Aorta (tissue), 5 donors: ENCODE measurements at regions of chr20 and their contacts with region 1.

Region 1: DNA sequence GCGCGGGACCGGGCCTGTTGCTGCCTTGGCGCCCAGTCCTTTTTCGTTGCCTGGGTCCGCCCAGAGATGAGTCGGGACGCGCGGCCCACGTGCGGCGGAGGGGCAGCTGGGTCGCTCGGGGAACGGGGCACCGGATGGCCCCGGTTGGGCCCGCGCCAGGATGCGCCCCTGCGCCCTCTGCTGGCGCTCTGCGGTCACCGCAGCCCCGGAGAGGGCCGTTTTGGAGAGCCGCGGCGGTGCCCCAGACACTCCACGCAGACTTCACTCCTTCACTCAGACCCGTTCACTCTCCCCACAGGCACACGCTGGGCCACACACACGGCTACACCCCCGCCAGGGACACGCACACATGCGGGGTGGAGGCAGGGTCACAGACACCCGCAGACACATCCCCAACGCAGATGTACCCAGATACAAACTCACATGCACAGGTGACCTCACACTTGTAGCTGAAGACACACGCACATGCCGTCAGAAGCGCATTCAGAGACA is 38.8 kb downstream of the SRC start:
- DNase-seq: peak; percentile 79 to 87
- ATAC-seq: peak; percentile 88
- H3K4me3 ChIP-seq: no peak overlapping the region
- H3K27ac ChIP-seq: no peak overlapping the region
- H3K4me1 ChIP-seq: no peaks in the 10 kb centered on the region
- H3K27me3 ChIP-seq: no peaks in the 10 kb centered on the region

Region 2: DNA sequence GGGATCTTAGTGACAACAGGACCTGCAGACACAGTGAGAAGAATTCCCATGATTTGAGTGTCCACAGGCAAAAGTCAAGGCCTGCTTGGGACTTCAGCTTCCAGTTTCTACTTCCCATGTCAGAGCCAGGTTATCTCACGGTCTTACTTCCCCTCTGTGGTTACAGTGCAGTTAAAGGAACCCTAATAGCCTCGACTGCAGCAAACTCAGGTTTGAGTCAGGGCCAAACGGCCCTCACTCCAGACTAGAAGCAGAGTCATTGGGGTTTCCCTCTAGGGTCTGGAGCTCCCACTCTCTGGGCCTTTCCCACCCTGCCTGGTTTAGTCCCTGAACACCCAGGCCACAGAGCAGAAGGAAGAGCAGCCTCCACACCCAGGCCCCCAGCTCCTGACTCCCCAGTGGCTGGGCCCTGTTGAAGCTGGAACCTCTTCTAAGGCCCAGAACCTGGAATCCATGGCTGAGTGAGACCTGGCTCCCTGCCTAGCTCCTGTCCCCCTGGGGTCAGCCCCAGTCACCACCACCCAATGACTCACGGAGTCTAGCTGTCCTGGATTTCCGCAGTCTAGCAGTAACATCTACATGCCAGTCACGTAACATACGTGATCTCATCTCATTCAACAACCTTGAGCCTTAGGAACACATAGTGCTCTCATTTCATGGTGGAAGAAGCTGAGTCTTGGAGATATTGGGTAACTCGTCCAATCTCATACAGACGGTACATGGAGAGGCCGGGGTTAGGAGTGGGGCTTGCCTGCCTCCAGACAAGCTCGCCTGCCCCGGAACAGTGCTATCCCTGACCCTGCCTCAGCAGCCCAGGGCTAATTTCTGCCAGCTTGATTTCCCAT is 113.9 kb before region 1 on chr20:
- intact Hi-C with region 1: loop called (anchors 2 to 5 kb)
- DNase-seq: peak; percentile 54 to 62
- ATAC-seq: peak; percentile 56
- H3K4me3 ChIP-seq: no peak overlapping the region
- H3K27ac ChIP-seq: no peak overlapping the region
- H3K4me1 ChIP-seq: no peaks in the 10 kb centered on the region
- H3K27me3 ChIP-seq: no peaks in the 10 kb centered on the region

Region 3: GRCh38 chr20:37276494-37277252 is 108.1 kb before region 1 on chr20:
- intact Hi-C with region 1: loop called (anchors 2 to 5 kb)
- DNase-seq: peak; percentile 74 to 76
- ATAC-seq: peak; percentile 84
- H3K4me3 ChIP-seq: no peak overlapping the region
- H3K27ac ChIP-seq: no peak overlapping the region
- H3K4me1 ChIP-seq: no peaks in the 10 kb centered on the region
- H3K27me3 ChIP-seq: no peaks in the 10 kb centered on the region

Region 4: GRCh38 chr20:37288091-37288490 is 96.6 kb before region 1 on chr20:
- intact Hi-C with region 1: loop called (anchors 5 kb)
- DNase-seq: no peak
- ATAC-seq: no peak
- H3K4me3 ChIP-seq: no peak overlapping the region
- H3K27ac ChIP-seq: no peak overlapping the region
- H3K4me1 ChIP-seq: no peaks in the 10 kb centered on the region
- H3K27me3 ChIP-seq: no peaks in the 10 kb centered on the region

Region 5: GRCh38 chr20:37345339-37346230 is 39.1 kb before region 1 on chr20 and contains the start of gene SRC:
- intact Hi-C with region 1: loop called in 1 of 2 experiments (anchors 2 kb)
- DNase-seq: peak; percentile 91 to 95
- ATAC-seq: peak; percentile 78
- H3K4me3 ChIP-seq: peak within 1 kb of the TSS; percentile 87 to 96
- H3K27ac ChIP-seq: peak within 1 kb of the TSS; percentile 71 to 74
- H3K4me1 ChIP-seq: no peaks in the 10 kb centered on the region
- H3K27me3 ChIP-seq: no peaks in the 10 kb centered on the region
- total RNA-seq, gene SRC: 51.3 to 72.4 TPM

Region 6: DNA sequence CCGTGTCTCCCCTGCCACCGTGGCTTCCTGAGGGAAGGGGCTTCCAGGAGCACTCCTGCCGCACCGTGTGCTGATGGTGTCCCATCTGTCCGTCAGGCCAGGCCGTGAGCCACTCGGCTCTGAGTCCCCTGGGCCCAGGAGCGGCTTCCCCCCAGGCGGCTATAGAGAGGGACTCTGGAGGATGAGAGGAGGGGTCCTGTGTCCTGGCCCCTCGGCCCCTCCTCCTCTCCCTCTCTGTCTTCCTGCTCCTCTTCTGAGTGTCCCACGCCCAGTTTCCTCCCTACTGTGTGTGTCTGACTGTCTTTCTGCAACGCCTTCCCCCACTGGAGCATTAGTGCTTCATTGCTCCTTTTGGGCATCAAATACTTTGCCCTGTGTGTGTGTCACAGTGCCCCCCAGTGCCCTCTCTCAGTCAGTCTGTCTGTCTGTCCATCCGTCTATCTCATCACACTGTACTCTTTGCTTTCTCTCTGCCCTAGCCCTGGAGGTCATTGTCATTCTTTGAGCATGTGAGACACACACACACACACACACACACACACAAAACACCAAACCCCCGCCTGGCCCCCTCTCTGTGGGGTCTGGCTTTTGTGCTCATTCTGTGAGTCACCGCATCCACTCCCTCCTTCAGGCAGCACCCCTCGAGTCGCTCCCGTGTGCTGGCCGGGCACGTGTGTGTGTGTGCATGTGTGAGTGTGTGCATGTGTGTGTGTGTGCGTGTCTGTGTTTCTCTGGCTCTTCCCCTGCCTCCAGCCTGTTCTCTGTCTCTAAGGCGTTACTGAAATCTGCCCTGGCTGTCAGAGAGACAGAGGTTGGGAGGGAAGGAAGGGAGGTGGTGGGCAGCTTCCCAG is 33.1 kb after region 1 on chr20:
- intact Hi-C with region 1: no loop called
- DNase-seq: no peak
- ATAC-seq: no peak
- H3K4me3 ChIP-seq: no peak overlapping the region
- H3K27ac ChIP-seq: no peak overlapping the region
- H3K4me1 ChIP-seq: no peaks in the 10 kb centered on the region
- H3K27me3 ChIP-seq: no peaks in the 10 kb centered on the region

Region 7: GRCh38 chr20:37976887-37977286 is 592.2 kb after region 1 on chr20:
- intact Hi-C with region 1: no loop called
- DNase-seq: no peak
- ATAC-seq: no peak
- H3K4me3 ChIP-seq: no peak overlapping the region
- H3K27ac ChIP-seq: no peak overlapping the region
- H3K4me1 ChIP-seq: no peaks in the 10 kb centered on the region
- H3K27me3 ChIP-seq: no peaks in the 10 kb centered on the region